GM12878 (cell line): ENCODE measurements at regions of chr6 and their contacts with region 1.

Region 1: DNA sequence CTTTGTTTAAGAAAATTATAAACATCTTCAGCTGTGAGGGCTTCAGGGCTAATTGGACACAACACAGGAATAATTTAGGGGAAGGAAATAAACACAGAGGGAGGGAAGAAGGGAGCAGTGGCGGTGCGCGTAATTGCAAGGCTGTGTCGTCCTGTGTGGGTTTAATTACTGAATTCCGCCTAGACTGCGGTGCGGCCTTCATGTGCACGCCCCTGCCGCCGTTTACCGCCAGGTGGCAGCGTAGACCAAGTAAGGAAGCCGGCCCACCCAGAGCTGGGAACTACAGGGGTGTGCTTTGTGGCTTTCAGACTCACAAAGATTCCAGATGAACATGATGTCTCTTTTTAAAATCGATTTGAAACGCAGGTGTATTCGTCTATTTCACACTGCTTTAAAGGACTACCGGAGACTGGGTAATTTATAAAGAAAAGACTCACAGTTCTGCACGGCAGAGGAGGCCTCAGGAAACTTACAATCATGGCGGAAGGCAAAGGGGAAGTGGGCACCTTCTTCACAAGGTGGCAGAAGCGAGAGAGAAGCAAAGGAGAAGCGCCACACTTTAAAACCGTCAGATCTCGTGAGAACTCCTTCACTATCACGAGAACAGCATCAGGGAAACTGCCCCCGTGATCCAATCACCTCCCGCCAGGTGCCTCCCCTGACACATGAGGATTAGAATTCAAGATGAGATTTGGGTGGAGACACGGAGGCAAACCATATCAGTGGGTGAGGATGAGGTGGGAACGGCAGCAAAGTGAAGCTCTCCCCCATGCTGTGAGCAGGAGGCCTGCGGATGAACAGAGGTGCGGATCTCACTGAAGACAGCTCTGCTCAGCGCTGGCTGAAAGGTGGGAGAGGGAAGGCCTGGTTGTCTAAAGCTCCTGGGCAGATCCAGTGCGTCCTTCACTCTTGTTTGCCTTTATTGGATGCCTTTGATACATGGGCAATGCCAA is 222.0 kb upstream of the PDE10A start:
- DNase-seq: peak; percentile 5
- ATAC-seq: peak; percentile 100
- H3K4me3 ChIP-seq: no peak overlapping the region
- H3K27ac ChIP-seq: no peak overlapping the region
- H3K4me1 ChIP-seq: no peaks in the 10 kb centered on the region
- H3K27me3 ChIP-seq: no peaks in the 10 kb centered on the region
- CTCF ChIP-seq: peak; percentile 88
- EP300 ChIP-seq: no peak
- POLR2A ChIP-seq: no peak
- RAD21 ChIP-seq: peak; percentile 83

Region 2: DNA sequence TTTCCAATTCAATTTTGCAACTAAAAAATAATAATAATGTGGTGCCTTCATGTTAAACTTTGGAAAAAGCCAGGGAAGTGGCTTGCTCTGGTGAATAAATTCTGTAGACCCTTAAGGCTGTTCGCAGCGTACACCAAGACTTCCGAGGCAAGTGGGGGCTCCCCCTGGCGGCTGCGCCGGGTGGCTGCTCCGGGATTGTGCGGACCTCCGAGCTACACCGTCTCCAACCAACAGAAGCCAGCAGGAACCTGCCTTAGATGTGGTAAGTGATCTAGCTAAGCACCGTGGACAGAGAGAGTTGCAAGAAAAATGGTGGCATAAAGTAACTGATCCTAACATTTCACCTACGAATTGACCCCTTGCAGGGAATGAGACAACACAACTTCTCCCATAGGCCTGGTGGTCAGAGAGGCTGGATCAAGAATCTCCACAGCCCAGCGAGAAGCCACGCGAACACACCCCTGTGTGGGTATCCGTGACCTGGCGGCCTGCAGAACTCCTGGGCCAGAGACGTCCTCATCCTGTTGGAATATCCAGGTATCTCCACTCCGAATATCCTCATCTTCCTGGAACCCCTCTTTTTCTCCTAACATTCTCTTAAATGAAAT is 212.9 kb after region 1 on chr6:
- CTCF ChIA-PET with region 1: interaction called, 69 read pairs
- POLR2A ChIA-PET with region 1: no interaction called
- RAD21 ChIA-PET with region 1: interaction called, 10 read pairs
- SMC1A ChIA-PET with region 1: interaction called, 5 read pairs
- in situ Hi-C with region 1: loop called (anchors 5 kb)
- intact Hi-C with region 1: loop called (anchors 1 kb)
- DNase-seq: no peak
- ATAC-seq: peak; percentile 92
- H3K4me3 ChIP-seq: no peak overlapping the region
- H3K27ac ChIP-seq: no peak overlapping the region
- H3K4me1 ChIP-seq: no peaks in the 10 kb centered on the region
- H3K27me3 ChIP-seq: no peaks in the 10 kb centered on the region
- CTCF ChIP-seq: peak; percentile 68 to 90 (median 83)
- EP300 ChIP-seq: no peak
- POLR2A ChIP-seq: no peak
- RAD21 ChIP-seq: peak; percentile 48

Region 3: GRCh38 chr6:166106076-166106686 is 221.1 kb after region 1 on chr6:
- CTCF ChIA-PET with region 1: interaction called, 69 read pairs
- POLR2A ChIA-PET with region 1: no interaction called
- RAD21 ChIA-PET with region 1: interaction called, 28 read pairs
- SMC1A ChIA-PET with region 1: interaction called, 14 read pairs
- in situ Hi-C with region 1: no loop called
- intact Hi-C with region 1: loop called (anchors 1 kb)
- DNase-seq: peak; percentile 36
- ATAC-seq: peak; percentile 84
- H3K4me3 ChIP-seq: no peak overlapping the region
- H3K27ac ChIP-seq: no peak overlapping the region
- H3K4me1 ChIP-seq: no peaks in the 10 kb centered on the region; the same call in 1 of the 2 replicates
- H3K27me3 ChIP-seq: no peaks in the 10 kb centered on the region
- CTCF ChIP-seq: peak; percentile 81 to 95 (median 90)
- EP300 ChIP-seq: no peak
- POLR2A ChIP-seq: no peak
- RAD21 ChIP-seq: peak; percentile 91